SK-N-SH (cell line): ENCODE measurements at regions of chr20 and their contacts with region 1.

Region 1: GRCh38 chr20:60210779-60211617 is 252.8 kb downstream of the CDH26 start:
- DNase-seq: peak; percentile 70
- H3K4me3 ChIP-seq: no peak overlapping the region
- H3K27ac ChIP-seq: no peak overlapping the region
- H3K4me1 ChIP-seq: peaks cover 0 to 31% of the 10 kb centered on the region in 2 experiments; a peak in 1 of 4 replicates
- H3K27me3 ChIP-seq: no peaks in the 10 kb centered on the region
- CTCF ChIP-seq: peak; percentile 30; the same call in 1 of the 2 replicates
- EP300 ChIP-seq: no peak
- RAD21 ChIP-seq: peak; percentile 92

Region 2: DNA sequence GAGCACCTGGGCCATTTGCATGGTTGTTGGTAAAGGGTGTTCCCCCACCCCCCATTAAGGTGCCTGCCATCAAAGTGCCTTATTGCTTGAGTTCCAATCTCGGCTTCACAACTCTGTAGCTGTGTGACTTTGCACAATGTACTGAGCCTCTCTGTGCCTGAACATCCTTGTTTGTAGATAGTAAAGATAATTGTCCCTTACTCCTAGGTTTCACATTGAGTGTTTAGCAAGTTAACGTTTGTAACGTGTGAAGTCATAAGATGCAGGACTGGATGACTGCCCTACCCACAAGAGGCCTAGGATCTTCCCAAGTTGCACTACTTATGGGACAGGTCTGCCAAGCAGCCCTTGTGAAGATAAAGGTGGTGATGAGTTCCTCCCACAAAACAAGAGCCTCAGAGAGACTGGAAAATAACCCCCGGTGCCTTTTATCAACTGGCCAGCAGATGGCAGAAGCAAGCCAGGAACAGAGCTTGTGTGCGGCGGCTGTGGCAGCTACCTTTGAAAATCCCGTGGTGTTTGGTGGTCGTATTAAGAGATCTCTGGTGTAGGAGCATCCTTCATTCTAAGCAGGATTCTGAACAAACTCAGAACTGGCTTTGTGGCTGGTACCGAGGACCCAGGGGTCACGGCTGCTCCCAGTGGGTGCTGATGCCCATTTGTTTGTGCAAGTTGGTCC is 153.7 kb before region 1 on chr20:
- CTCF ChIA-PET with region 1: interaction called, 48 read pairs
- POLR2A ChIA-PET with region 1: no interaction called
- DNase-seq: peak; percentile 78
- H3K4me3 ChIP-seq: peak overlapping the region in 1 of 2 experiments; percentile 35; a peak in 1 of 4 replicates
- H3K27ac ChIP-seq: no peak overlapping the region
- H3K4me1 ChIP-seq: peaks cover 0 to 10% of the 10 kb centered on the region in 2 experiments; a peak in 2 of 4 replicates
- H3K27me3 ChIP-seq: no peaks in the 10 kb centered on the region
- CTCF ChIP-seq: peak; percentile 48
- EP300 ChIP-seq: no peak
- RAD21 ChIP-seq: peak; percentile 92

Region 3: GRCh38 chr20:60224914-60225313 is 13.9 kb after region 1 on chr20:
- CTCF ChIA-PET with region 1: interaction called, 30 read pairs
- POLR2A ChIA-PET with region 1: no interaction called
- DNase-seq: peak; percentile 52
- H3K4me3 ChIP-seq: no peak overlapping the region
- H3K27ac ChIP-seq: no peak overlapping the region
- H3K4me1 ChIP-seq: no peaks in the 10 kb centered on the region
- H3K27me3 ChIP-seq: no peaks in the 10 kb centered on the region
- CTCF ChIP-seq: 0 out of 2 replicates have a peak, but pooled peaks have one; percentile 19
- EP300 ChIP-seq: no peak
- RAD21 ChIP-seq: peak; percentile 61

Region 4: GRCh38 chr20:60358101-60358500 is 147.1 kb after region 1 on chr20:
- CTCF ChIA-PET with region 1: interaction called, 81 read pairs
- POLR2A ChIA-PET with region 1: no interaction called
- DNase-seq: no peak
- H3K4me3 ChIP-seq: no peak overlapping the region
- H3K27ac ChIP-seq: no peak overlapping the region
- H3K4me1 ChIP-seq: no peaks in the 10 kb centered on the region; a peak in 1 of 4 replicates
- H3K27me3 ChIP-seq: no peaks in the 10 kb centered on the region
- CTCF ChIP-seq: no peak
- EP300 ChIP-seq: no peak
- RAD21 ChIP-seq: no peak

Region 5: GRCh38 chr20:60431349-60431748 is 220.4 kb after region 1 on chr20:
- CTCF ChIA-PET with region 1: no interaction called
- POLR2A ChIA-PET with region 1: no interaction called
- DNase-seq: no peak
- H3K4me3 ChIP-seq: no peak overlapping the region
- H3K27ac ChIP-seq: no peak overlapping the region
- H3K4me1 ChIP-seq: no peaks in the 10 kb centered on the region; a peak in 1 of 4 replicates
- H3K27me3 ChIP-seq: no peaks in the 10 kb centered on the region
- CTCF ChIP-seq: no peak
- EP300 ChIP-seq: no peak
- RAD21 ChIP-seq: no peak

Region 6: GRCh38 chr20:60453388-60454246 is 242.6 kb after region 1 on chr20:
- CTCF ChIA-PET with region 1: interaction called, 34 read pairs
- POLR2A ChIA-PET with region 1: no interaction called
- DNase-seq: peak; percentile 52
- H3K4me3 ChIP-seq: no peak overlapping the region
- H3K27ac ChIP-seq: no peak overlapping the region
- H3K4me1 ChIP-seq: no peaks in the 10 kb centered on the region
- H3K27me3 ChIP-seq: no peaks in the 10 kb centered on the region
- CTCF ChIP-seq: no peak
- EP300 ChIP-seq: no peak
- RAD21 ChIP-seq: peak; percentile 58

Region 7: GRCh38 chr20:61234008-61234802 is 1023.2 kb after region 1 on chr20:
- CTCF ChIA-PET with region 1: interaction called, 32 read pairs
- POLR2A ChIA-PET with region 1: no interaction called
- DNase-seq: no peak
- H3K4me3 ChIP-seq: no peak overlapping the region
- H3K27ac ChIP-seq: no peak overlapping the region
- H3K4me1 ChIP-seq: no peaks in the 10 kb centered on the region
- H3K27me3 ChIP-seq: no peaks in the 10 kb centered on the region
- CTCF ChIP-seq: no peak
- EP300 ChIP-seq: no peak
- RAD21 ChIP-seq: no peak